ENCODE measurements at regions of chr10 and their contacts with region 1.

Region 1: DNA sequence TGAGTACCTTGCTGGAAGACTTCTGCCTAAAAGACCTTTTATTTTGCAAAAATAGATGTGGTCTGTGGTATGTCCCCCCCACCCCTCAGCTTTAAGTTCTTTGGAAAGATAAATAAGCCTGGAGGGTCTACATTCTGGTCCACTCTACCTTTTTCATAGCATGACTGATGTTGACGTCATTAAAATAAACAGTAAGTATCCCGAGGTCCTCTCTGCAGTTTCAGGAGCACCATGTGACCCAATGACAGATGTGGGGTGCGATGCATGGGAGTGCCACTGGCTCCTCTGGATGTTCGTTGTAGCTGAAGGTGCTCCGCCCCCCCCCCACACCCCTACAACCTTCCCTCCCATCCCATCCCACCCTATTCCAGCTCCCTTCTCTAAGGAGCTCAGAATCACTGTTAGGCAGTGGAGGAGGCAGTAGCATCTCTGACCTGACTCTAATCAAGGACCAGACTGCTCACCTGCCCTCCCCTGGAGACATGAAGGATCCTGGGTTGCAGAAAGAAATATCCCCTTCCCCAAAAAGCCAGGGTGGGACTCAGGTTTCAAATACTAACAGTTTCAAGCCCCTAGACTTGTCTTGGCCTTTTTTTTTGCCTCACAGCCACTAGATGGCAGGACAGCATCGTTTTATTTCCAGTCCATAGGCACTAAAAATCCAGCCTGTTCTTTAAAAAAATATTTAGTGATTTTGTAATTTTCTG is 25.1 kb downstream of the CASP7 start:
- DNase-seq: peak; percentile 4
- H3K4me3 ChIP-seq: no peak overlapping the region
- H3K27ac ChIP-seq: no peak overlapping the region
- H3K4me1 ChIP-seq: peaks cover 4% of the 10 kb centered on the region
- H3K27me3 ChIP-seq: no peaks in the 10 kb centered on the region
- CTCF ChIP-seq: peak; percentile 64 to 67

Region 2: GRCh38 chr10:113746217-113746957 is 41.6 kb after region 1 on chr10:
- CTCF ChIA-PET with region 1: no interaction called
- dilution Hi-C with region 1: no loop called
- in situ Hi-C with region 1: no loop called
- intact Hi-C with region 1: no loop called
- DNase-seq: no peak
- H3K4me3 ChIP-seq: no peak overlapping the region
- H3K27ac ChIP-seq: no peak overlapping the region
- H3K4me1 ChIP-seq: no peaks in the 10 kb centered on the region
- H3K27me3 ChIP-seq: no peaks in the 10 kb centered on the region
- CTCF ChIP-seq: no peak

Region 3: DNA sequence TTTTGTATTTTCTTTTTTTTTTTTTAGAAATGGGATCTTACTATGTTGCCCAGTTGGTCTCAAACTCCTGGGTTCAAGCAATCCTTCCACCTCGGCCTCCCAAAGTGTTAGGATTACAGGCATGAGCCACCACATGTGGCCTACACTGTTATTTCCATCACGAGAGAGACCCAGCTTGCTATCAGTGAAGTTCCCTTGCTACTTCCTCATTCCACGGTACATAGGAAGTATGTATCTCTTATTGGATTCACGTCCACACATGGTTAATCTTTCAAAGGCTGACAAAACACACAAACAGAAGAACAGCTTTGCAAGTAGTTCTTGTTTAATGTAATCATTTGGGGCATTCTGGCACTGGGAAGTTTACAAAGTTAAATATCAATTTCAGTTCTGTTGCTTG is 98.2 kb after region 1 on chr10:
- CTCF ChIA-PET with region 1: no interaction called
- dilution Hi-C with region 1: no loop called
- in situ Hi-C with region 1: no loop called
- intact Hi-C with region 1: loop called (anchors 1 kb)
- DNase-seq: no peak
- H3K4me3 ChIP-seq: no peak overlapping the region
- H3K27ac ChIP-seq: no peak overlapping the region
- H3K4me1 ChIP-seq: no peaks in the 10 kb centered on the region
- H3K27me3 ChIP-seq: peaks cover 4% of the 10 kb centered on the region
- CTCF ChIP-seq: no peak

Region 4: DNA sequence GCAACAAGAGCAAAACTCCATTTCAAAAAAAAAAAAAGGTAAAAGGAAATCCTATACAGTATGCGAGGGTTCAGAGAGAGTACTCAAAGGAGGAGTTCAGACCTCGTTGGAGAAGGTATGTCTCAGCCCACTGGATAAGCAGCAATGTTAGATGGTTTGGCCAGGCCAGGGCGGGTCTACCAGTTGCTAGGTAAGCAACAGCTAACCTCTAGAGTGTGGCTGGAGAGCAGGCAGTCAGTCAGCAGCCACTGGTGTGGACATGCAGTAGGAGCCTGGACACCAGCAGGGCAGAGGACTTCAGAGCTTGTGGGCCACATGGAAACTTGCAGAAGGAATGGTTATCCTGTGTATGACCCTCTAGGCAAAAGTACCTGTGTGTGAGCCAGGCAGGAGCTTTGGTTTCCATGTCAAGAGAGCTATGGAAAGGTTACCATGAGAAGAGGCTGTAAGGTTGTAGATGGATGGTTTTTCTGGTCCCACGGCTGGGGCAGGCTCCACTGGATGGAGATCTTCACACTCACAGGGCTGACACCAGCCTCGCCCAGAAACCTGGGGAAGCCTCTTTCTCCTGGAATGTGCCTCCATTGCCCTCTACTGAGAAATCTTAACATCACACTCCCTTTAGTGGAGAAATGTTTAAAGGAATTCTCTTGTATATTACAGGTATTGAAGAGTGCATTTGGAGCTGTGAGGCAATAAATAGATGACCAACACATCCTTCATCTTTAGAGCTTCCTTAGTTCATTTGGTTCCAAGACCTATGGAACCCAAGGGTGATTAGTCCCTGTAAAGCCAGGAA is 405.6 kb after region 1 on chr10:
- CTCF ChIA-PET with region 1: no interaction called
- dilution Hi-C with region 1: no loop called
- in situ Hi-C with region 1: loop called in 1 of 2 experiments (anchors 10 kb)
- intact Hi-C with region 1: loop called (anchors 1 kb)
- DNase-seq: peak; percentile 39
- H3K4me3 ChIP-seq: no peak overlapping the region
- H3K27ac ChIP-seq: no peak overlapping the region
- H3K4me1 ChIP-seq: no peaks in the 10 kb centered on the region
- H3K27me3 ChIP-seq: no peaks in the 10 kb centered on the region
- CTCF ChIP-seq: peak; percentile 40 to 51

Region 5: DNA sequence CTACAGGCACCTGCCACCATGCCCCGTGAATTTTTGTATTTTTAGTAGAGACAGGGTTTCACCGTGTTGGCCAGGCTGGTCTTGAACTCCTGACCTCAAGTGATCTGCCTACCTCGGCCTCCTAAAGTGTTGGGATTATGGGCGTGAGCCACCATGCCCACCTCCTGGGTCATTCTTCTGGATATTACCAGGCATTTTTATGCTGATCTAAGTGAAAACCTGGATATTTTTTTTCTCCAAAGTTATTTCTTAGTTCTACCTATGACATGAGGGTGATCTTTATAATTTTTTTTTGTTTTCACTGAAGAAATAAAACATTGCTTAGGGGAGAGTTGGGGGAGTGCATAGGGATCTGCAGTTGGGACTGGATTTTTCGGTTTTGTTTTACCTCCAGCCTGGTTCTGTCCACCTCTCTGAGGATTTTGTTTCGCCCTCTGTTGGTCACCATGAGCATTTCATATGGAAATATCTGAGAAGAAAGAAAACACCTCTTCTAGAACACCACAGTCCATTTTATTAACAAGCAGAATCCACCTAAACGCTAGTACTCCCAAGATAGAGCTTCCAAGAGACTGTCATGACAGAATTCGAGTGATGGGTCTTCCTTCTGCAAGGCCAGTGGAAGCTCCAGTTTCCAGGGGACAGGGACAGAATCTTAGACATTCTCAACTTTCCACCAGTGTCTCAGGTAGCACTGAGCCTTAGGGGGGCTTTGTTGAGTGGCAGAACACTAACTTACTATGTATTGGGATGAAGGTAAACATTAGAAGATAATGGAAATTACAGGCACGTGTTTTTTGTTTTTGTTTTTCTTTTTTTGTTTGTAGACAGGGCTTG is 732.9 kb after region 1 on chr10:
- CTCF ChIA-PET with region 1: no interaction called
- dilution Hi-C with region 1: no loop called
- in situ Hi-C with region 1: no loop called
- intact Hi-C with region 1: loop called (anchors 10 kb)
- DNase-seq: peak; percentile 26
- H3K4me3 ChIP-seq: no peak overlapping the region
- H3K27ac ChIP-seq: no peak overlapping the region
- H3K4me1 ChIP-seq: no peaks in the 10 kb centered on the region
- H3K27me3 ChIP-seq: no peaks in the 10 kb centered on the region
- CTCF ChIP-seq: peak; percentile 49 to 61

Measured in mammary epithelial cell (primary cell).